ENCODE measurements at regions of chr10 and their contacts with region 1.

Region 1: GRCh38 chr10:124418726-124419501 is at the start of gene OAT:
- DNase-seq: peak; percentile 96
- ATAC-seq: peak; percentile 94
- H3K4me3 ChIP-seq: peak within 1 kb of the TSS; percentile 54 to 74
- H3K27ac ChIP-seq: peak within 1 kb of the TSS; percentile 37
- H3K4me1 ChIP-seq: peaks cover 10 to 15% of the 10 kb centered on the region in 2 experiments
- H3K27me3 ChIP-seq: no peaks in the 10 kb centered on the region
- CTCF ChIP-seq: peak in 1 of 3 experiments; percentile 45; a peak in 3 of 6 replicates
- POLR2A ChIP-seq: peak; percentile 99
- RAD21 ChIP-seq: no peak
- total RNA-seq, gene OAT: 133 TPM

Region 2: GRCh38 chr10:124403548-124403947 is 15.4 kb before region 1 on chr10:
- CTCF ChIA-PET with region 1: interaction called, 23 read pairs
- POLR2A ChIA-PET with region 1: interaction called, 17 read pairs
- RAD21 ChIA-PET with region 1: interaction called in 1 of 2 experiments, 4 read pairs
- intact Hi-C with region 1: no loop called
- DNase-seq: peak; percentile 89
- ATAC-seq: peak; percentile 98
- H3K4me3 ChIP-seq: no peak overlapping the region
- H3K27ac ChIP-seq: 0 out of 2 replicates have a peak overlapping the region, but pooled peaks have one; percentile 4
- H3K4me1 ChIP-seq: no peaks in the 10 kb centered on the region
- H3K27me3 ChIP-seq: no peaks in the 10 kb centered on the region
- CTCF ChIP-seq: peak; percentile 70 to 86 (median 75); a peak in 5 of 6 replicates
- POLR2A ChIP-seq: no peak
- RAD21 ChIP-seq: peak; percentile 75

Region 3: DNA sequence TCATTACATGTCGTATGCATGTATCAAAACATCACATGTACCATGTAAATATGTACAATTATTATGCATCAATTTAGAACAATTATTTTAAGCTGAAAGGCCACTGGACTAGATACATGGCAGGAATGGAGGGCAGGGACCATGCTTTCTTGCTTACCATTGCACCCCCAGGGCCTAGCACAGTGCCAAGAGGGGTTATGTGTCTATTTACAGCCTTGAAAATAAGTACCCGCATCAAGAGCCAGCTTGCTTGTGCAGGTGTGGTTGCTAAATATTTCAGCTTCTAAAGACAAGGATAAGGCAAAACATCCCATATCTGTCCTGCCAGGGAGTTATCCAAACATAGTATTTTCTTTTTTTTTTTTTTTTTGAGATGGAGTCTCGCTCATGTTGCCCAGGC is 14.5 kb after region 1 on chr10:
- CTCF ChIA-PET with region 1: interaction called, 4 read pairs
- POLR2A ChIA-PET with region 1: interaction called, 14 read pairs
- RAD21 ChIA-PET with region 1: no interaction called
- intact Hi-C with region 1: no loop called
- DNase-seq: no peak
- ATAC-seq: no peak
- H3K4me3 ChIP-seq: no peak overlapping the region
- H3K27ac ChIP-seq: no peak overlapping the region
- H3K4me1 ChIP-seq: peaks cover 2 to 16% of the 10 kb centered on the region in 2 experiments; a peak in 2 of 4 replicates
- H3K27me3 ChIP-seq: no peaks in the 10 kb centered on the region
- CTCF ChIP-seq: no peak
- POLR2A ChIP-seq: no peak
- RAD21 ChIP-seq: no peak

Region 4: DNA sequence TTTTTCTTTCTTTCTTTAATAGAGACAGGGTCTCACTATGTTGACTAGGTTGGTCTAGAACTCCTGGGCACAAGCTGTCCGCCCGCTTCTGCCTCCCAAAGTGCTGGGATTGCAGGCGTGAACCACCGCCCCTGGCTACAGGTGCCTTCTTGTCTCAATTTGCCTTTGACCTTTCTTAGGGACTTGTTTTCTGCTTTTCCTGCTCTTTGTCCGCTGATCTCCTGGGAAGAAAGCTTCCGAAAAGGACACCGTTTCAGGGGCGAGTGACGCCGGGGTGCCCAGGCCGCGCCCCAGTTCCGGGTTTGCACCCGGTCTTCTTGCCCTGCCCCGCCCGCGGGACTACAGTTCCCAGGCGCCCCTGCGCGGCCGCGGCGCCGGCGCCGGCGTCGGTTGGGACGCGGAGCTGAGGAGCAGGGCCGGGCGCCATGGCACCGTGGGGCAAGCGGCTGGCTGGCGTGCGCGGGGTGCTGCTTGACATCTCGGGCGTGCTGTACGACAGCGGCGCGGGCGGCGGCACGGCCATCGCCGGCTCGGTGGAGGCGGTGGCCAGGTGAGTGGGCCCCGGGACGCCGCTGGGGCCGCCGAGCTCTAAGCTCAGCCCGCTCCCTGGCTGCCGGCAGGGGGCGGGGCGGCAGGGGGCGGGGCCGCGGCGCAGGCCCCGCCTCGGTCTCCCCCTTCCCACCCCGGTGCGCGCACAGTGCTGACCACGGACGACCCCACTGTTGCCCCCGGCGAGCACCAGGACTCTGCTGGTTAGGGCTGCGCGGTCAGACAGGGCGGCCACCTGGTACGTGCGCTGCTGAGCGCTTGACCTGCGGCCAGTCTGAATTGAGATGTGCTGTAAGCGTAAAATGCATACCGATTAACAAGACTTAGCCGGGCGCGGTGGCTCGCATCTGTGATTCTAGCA is 42.8 kb after region 1 on chr10 and contains the start of gene LHPP:
- CTCF ChIA-PET with region 1: interaction called, 4 read pairs
- POLR2A ChIA-PET with region 1: interaction called, 10 read pairs
- RAD21 ChIA-PET with region 1: no interaction called
- intact Hi-C with region 1: no loop called
- DNase-seq: peak; percentile 69
- ATAC-seq: peak; percentile 98
- H3K4me3 ChIP-seq: peak within 1 kb of the TSS; percentile 66 to 85
- H3K27ac ChIP-seq: peak within 1 kb of the TSS; percentile 69
- H3K4me1 ChIP-seq: peaks cover 6 to 37% of the 10 kb centered on the region in 2 experiments; a peak in 3 of 4 replicates
- H3K27me3 ChIP-seq: no peaks in the 10 kb centered on the region
- CTCF ChIP-seq: peak in 1 of 3 experiments; percentile 20; a peak in 2 of 6 replicates
- POLR2A ChIP-seq: peak; percentile 67
- RAD21 ChIP-seq: no peak
- total RNA-seq, gene LHPP: 45.8 TPM

Region 5: GRCh38 chr10:125406998-125407502 is 988.1 kb after region 1 on chr10:
- CTCF ChIA-PET with region 1: no interaction called
- POLR2A ChIA-PET with region 1: no interaction called
- RAD21 ChIA-PET with region 1: no interaction called
- intact Hi-C with region 1: no loop called
- DNase-seq: peak; percentile 18
- ATAC-seq: 0 out of 2 replicates have a peak, but pooled peaks have one; percentile 46
- H3K4me3 ChIP-seq: no peak overlapping the region
- H3K27ac ChIP-seq: no peak overlapping the region
- H3K4me1 ChIP-seq: peaks cover 0 to 8% of the 10 kb centered on the region in 2 experiments; a peak in 1 of 4 replicates
- H3K27me3 ChIP-seq: no peaks in the 10 kb centered on the region
- CTCF ChIP-seq: no peak
- POLR2A ChIP-seq: no peak
- RAD21 ChIP-seq: no peak

Measured in HCT116 (cell line).